ENCODE measurements at regions of chr1 and their contacts with region 1.

Region 1: DNA sequence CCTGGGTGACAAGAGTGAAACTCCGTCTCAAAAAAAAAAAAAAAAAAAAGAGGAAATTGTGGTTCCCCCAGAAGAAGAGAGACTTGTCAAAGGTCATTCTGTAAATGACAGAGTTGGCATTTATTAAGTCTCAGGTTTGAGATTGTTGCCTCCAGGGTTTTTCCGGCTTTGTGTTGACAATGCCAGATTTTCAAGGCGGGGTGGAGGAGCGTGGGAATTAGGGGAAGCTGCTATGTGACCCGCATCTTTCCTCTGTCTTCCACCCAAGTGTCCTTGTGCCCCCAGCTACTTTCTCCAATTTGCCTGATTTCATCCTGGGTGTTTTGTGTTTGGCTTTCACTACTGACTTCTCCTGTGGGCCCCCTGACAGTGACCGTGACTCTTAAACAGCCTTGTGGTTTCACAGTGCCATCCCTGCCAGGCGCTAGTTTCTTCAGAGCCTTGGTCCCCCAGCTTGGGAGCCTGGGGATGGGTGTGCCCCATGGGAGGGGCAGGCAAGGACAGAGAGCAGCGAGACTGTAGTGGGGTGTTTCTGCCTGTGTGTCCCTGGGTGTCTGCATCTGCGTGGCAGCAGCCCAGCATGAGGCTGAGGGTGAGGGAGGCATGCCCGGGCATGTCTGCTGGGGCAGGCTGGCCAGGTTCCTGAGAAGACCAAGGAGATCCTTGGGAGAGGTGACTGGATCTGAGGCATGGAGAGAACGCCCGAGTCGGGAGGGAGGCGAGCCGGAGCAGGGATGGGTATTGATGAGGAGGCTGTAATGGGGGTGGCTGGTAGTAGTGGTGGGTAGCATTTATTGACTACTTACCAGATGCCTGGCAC is 46.3 kb downstream of the IER5 start:
- DNase-seq: peak; percentile 91
- ATAC-seq: peak; percentile 57
- H3K4me3 ChIP-seq: peak overlapping the region; percentile 66
- H3K27ac ChIP-seq: peak overlapping the region; percentile 92
- H3K4me1 ChIP-seq: peaks cover 73% of the 10 kb centered on the region
- H3K27me3 ChIP-seq: no peaks in the 10 kb centered on the region
- CTCF ChIP-seq: no peak
- EP300 ChIP-seq: peak; percentile 4 to 40; a peak in 2 of 4 replicates
- POLR2A ChIP-seq: peak; percentile 81
- RAD21 ChIP-seq: no peak

Region 2: DNA sequence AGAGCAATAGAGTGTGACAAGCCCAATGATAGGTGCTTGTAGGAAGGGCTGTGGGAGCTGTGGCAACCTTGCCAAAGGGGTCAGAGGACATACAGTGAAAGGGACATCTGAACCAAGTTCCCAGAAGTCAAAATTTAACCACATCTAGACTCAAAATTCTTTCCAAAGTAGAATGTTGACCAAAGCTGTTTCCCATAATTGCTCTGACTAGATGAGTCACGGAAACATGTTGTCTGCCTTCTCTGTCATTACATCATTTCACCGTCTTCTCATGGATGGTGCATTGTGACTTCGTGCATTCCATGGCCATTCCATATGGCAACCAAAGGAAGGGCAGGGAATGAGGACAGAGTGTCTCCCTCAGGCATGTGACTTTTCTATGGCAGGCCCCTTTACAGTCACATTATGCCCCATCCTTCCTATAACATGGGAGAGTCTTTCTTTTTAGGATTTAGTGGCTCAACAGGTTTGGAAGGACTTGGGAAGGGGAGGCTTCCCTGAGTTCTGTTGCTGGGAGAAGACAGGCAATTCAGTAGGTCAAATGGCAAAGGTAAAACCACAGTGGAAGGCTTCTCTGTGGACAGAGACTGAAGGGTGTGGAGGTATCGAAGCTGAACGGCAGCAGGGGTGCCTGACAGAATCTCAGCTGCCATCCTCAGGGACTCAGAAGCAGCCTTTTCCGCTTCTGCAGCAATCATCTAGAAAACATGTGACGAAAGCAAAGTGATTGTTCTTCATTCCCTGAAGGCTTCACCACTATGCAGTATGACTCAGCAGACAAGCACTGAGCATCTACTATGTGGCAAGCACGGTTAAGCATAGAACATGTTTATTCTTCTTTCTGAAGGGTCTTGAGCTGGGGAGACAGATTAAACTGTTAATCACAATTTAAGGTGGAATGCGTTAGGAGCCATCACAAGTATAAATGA is 1583.7 kb before region 1 on chr1:
- CTCF ChIA-PET with region 1: no interaction called
- POLR2A ChIA-PET with region 1: no interaction called
- RAD21 ChIA-PET with region 1: no interaction called
- SMC1A ChIA-PET with region 1: no interaction called
- in situ Hi-C with region 1: no loop called
- intact Hi-C with region 1: no loop called
- DNase-seq: peak; percentile 26
- ATAC-seq: peak; percentile 89
- H3K4me3 ChIP-seq: no peak overlapping the region
- H3K27ac ChIP-seq: no peak overlapping the region
- H3K4me1 ChIP-seq: no peaks in the 10 kb centered on the region; the same call in 1 of the 2 replicates
- H3K27me3 ChIP-seq: no peaks in the 10 kb centered on the region
- CTCF ChIP-seq: no peak
- EP300 ChIP-seq: 0 out of 4 replicates have a peak, but pooled peaks of 1 of the 2 experiments have one; percentile 48
- POLR2A ChIP-seq: no peak
- RAD21 ChIP-seq: no peak

Region 3: DNA sequence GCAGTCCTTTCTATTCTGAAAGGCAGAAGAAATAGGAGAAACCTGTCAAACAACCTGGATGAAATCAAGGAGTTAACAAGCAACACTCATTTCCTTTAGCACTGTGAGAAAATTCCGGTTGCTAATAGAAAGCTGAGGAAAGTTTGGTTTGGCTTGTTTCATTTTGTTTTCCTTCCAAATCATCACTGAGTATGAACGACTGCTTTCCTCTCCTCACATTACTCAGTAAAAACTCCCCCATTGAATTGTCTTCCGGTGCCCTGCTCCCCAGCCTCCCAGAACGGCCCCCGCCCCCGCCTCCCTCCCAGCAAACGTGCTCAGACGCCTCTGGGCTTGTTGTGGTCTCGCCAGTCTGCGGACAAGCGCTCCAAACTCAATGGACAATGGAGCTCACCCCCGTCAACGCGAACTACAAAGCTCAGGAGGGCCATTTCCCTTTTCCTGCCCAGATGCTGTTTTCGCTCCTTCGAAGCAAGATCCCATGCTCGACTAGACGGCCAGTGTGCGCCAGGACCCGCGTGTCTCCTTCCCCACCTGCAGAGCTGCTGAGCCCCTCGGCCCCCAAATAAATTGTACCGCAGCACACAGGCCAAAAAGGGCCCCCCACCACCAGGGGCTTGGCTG is 112.8 kb before region 1 on chr1:
- CTCF ChIA-PET with region 1: interaction called, 3 read pairs
- POLR2A ChIA-PET with region 1: interaction called, 5 read pairs
- RAD21 ChIA-PET with region 1: interaction called, 14 read pairs
- SMC1A ChIA-PET with region 1: interaction called, 11 read pairs
- in situ Hi-C with region 1: no loop called
- intact Hi-C with region 1: no loop called
- DNase-seq: no peak
- ATAC-seq: peak; percentile 76
- H3K4me3 ChIP-seq: peak overlapping the region; percentile 90
- H3K27ac ChIP-seq: peak overlapping the region; percentile 89
- H3K4me1 ChIP-seq: peaks cover 12% of the 10 kb centered on the region
- H3K27me3 ChIP-seq: no peaks in the 10 kb centered on the region
- CTCF ChIP-seq: no peak
- EP300 ChIP-seq: no peak
- POLR2A ChIP-seq: no peak
- RAD21 ChIP-seq: no peak

Region 4: DNA sequence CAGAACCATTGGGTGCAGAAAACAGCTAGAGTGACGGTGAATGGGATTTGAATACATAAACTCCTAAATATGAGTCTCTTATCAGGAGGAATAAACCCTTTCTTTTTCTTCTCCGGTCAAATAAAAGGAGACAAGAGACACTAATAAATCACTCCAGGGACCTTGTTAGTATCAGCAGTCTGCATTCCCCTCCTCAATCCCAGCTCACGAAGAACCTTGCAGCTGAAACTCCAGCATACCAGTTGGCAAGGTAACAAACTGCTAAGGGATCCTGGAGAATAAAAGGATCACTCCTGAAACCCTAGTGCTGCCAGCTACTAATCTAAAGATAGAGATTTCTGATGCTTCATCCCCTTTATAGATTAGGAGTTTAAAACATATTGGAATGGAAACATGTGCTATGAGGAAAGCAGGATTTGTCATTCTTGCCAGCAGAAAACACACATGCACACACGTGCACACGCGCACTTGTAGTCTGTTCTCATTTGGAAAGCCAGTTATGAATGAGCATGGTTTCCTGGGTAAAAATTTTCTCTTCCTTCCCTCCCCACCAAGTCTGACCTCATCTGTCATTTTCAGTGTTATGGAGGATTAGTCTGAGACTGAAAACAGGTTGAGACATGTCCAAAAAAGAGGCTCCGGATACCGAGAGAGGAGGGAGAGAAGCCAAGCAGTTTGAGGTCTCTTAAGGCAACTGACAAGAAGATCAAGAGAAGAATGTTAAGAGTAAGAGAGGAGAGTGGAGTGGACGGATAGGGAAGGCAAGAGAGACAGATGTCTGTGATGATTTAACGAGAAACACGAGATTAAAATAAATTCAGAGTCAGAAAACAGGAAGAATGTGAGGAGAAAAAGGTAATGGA is 35.4 kb before region 1 on chr1:
- CTCF ChIA-PET with region 1: interaction called, 1,067 read pairs
- POLR2A ChIA-PET with region 1: interaction called, 256 read pairs
- RAD21 ChIA-PET with region 1: interaction called, 966 read pairs
- SMC1A ChIA-PET with region 1: interaction called, 1,399 read pairs
- in situ Hi-C with region 1: loop called (anchors 5 kb)
- intact Hi-C with region 1: loop called (anchors 1 kb)
- DNase-seq: peak; percentile 95
- ATAC-seq: peak; percentile 60
- H3K4me3 ChIP-seq: peak overlapping the region; percentile 18
- H3K27ac ChIP-seq: peak overlapping the region; percentile 89
- H3K4me1 ChIP-seq: peaks cover 86% of the 10 kb centered on the region
- H3K27me3 ChIP-seq: no peaks in the 10 kb centered on the region
- CTCF ChIP-seq: no peak
- EP300 ChIP-seq: peak; percentile 67 to 90; a peak in 3 of 4 replicates
- POLR2A ChIP-seq: no peak
- RAD21 ChIP-seq: no peak; the same call in 1 of the 2 replicates

Region 5: DNA sequence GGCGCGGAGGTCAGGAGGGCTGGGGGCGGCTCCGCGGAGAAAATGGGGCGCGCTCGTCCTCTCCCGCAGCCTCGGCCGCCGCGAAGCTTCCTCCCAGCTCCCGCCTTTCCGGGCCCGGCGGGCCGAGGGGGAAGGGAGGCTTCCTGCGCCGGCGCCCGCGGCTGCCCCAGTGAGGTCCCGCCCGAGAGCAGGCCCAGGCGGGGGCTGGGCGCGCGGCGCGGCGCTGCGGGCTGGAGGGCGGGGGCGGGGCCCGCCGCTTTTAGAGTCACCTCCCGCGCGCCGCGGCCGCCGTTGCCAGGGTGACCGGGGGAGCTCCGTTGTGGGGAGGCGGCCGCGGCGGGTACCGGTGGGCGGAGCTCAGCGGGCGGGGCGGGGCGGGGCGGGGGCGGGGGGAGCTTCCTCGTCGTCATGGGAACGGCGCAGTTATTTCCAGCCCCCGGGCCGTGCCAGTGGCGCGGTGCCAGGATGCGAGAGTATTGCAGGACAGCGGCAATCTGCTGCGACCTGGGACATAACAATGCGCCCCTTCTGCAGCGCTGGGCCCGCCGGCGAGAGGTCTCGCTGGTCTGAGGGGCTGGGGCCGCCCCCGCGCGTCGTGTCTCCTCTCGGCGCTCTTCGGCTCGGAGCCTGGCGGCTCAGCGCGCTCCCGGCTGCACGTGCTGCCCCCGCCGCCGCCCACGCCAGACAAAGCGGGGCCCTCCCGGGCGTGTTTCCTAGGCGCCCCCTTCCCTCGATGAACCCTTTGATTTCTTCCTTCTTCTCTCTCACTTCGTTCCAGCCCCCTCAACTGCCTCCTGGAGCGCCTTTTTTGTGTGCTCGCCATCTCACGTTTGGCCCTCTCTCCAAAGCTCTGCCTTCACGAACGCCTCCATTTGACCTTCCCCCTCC is 29.4 kb before region 1 on chr1:
- CTCF ChIA-PET with region 1: interaction called, 1,067 read pairs
- POLR2A ChIA-PET with region 1: interaction called, 256 read pairs
- RAD21 ChIA-PET with region 1: interaction called, 966 read pairs
- SMC1A ChIA-PET with region 1: interaction called, 1,399 read pairs
- in situ Hi-C with region 1: no loop called
- intact Hi-C with region 1: loop called (anchors 1 kb)
- DNase-seq: no peak
- ATAC-seq: peak; percentile 82
- H3K4me3 ChIP-seq: peak overlapping the region; percentile 94
- H3K27ac ChIP-seq: peak overlapping the region; percentile 70
- H3K4me1 ChIP-seq: peaks cover 44% of the 10 kb centered on the region
- H3K27me3 ChIP-seq: no peaks in the 10 kb centered on the region
- CTCF ChIP-seq: no peak
- EP300 ChIP-seq: no peak
- POLR2A ChIP-seq: peak; percentile 65
- RAD21 ChIP-seq: no peak

Measured in GM12878 (cell line).